ENCODE measurements at regions of chr15 and their contacts with region 1.

Region 1: DNA sequence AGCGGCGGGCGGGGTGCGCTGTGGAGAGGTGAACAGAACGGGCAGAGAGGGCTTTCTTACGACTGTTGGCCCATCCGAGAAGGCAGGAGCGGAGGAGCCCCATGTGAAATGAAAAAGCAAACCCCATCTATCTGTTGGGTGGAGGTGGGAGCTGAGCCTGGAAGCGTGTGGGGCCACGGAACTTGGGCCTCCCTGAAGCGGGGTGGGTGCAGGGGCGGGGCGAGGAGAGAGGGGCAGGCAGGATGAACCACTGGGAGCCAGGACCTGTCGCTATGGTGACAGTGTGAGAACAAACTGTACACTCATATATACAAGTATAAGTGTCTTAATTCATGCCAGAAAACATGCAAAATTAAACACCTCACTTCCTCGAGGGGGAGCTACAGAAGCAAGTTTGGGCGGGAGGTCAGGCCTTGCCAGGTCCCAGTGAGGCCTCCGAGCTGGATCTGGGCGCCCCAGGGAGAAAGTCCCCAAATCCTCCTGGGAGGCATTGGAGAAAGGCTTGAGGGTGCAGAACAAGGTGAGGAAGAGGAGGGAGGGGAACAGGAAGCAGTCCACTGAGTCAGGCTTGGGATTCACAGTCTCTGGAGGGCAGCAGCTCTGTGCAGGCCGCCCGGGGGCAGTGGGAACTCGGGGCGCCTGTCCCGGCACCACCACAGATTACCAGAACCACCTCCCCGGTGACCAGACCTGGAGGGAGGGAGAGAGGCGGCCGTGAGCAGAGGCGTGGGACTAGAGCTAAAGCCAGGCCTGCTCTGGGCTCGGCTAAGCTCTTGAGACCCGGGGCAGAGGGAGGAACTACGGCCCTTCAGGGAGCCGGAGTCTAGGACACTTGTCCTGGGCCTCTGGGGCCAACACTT is 34.8 kb downstream of the RBPMS2 start:
- DNase-seq: peak; percentile 80
- H3K4me3 ChIP-seq: no peak overlapping the region
- H3K27ac ChIP-seq: peak overlapping the region; percentile 65 to 69
- H3K4me1 ChIP-seq: peaks cover 15% of the 10 kb centered on the region
- H3K27me3 ChIP-seq: no peaks in the 10 kb centered on the region
- CTCF ChIP-seq: peak in 1 of 3 experiments; percentile 12
- POLR2A ChIP-seq: no peak

Region 2: DNA sequence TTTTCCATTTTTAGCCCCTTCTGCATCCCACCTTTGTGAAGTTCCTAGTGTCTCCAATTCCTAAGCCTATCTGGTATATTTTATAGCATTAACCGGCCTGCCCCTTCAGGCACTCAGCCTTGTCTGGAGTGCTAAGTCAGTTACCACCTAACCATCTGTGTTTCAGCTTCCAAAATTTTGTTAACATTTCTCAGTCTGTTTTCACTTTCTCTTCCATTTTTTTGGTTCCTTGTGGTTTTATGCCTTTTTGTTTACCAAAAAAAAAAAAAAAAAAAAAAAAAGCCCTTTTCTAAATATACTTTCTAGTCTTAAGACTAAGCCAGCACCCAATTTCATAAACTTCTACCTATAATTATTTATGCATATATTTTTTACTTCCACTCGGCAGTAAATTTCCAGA is 477.0 kb before region 1 on chr15:
- intact Hi-C with region 1: no loop called
- DNase-seq: no peak
- H3K4me3 ChIP-seq: no peak overlapping the region
- H3K27ac ChIP-seq: no peak overlapping the region
- H3K4me1 ChIP-seq: no peaks in the 10 kb centered on the region
- H3K27me3 ChIP-seq: no peaks in the 10 kb centered on the region
- CTCF ChIP-seq: no peak
- POLR2A ChIP-seq: no peak

Region 3: DNA sequence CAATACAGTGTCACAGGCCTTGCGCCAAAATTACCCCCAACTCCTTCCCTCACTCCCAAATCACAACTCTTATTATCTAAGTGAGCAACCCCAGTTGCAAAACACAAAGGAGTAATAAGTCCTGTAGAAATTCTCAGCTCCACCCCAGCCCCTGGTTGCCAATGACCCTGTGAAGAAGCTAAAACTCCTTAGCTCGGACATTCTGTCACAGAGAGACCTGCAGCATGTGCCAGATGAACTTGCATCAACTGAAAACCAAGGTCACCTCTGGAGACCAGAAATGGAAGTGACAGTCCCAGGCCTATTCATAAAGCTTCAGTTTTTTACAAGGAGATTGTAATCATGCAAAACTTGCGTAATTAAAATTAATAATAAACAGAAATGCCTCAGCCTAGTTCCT is 20.4 kb before region 1 on chr15:
- intact Hi-C with region 1: no loop called
- DNase-seq: peak; percentile 78
- H3K4me3 ChIP-seq: no peak overlapping the region
- H3K27ac ChIP-seq: no peak overlapping the region
- H3K4me1 ChIP-seq: peaks cover 13% of the 10 kb centered on the region
- H3K27me3 ChIP-seq: no peaks in the 10 kb centered on the region
- CTCF ChIP-seq: no peak
- POLR2A ChIP-seq: no peak

Region 4: DNA sequence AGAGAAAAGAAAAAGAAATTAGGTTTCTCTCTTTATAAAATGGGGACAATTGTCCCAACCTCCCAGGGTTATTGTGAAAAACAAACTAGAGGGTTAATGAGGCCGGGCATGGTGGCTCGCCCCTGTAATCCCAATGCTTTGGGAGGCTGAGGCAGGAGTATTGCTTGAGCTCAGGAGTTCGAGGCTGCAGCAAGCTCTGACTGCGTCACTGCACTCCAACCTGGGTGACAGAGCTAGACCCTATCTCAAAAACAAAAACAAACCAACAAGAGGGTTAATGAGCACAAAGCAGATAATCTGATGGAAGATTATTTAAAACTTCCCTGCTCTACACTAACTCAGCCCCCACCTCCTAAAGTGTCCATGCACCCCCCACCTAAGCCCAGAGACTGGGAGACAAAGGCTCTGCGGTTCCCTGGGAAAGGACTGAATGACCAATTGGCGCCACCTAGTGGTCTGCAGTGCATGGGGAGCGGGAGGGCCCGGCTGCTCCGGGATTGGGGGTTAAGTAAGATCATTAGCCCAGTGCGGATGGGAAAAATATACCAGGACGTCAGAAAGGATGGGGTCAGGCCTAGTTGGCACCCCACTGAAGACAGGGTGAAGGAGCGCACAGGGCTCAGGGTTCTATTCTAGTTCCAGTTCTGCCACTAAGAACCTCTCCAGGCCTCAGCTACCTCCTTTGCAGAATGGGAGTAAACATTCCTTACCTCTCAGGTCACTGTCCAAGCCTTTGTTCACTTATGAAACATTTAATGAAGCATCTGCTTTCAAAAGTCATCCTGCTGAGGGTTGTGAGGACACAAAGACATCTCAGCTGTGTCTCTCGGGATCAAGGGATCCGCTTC is 69.3 kb after region 1 on chr15:
- intact Hi-C with region 1: loop called (anchors 10 kb)
- DNase-seq: peak; percentile 90
- H3K4me3 ChIP-seq: no peak overlapping the region
- H3K27ac ChIP-seq: no peak overlapping the region
- H3K4me1 ChIP-seq: peaks cover 4% of the 10 kb centered on the region
- H3K27me3 ChIP-seq: no peaks in the 10 kb centered on the region
- CTCF ChIP-seq: peak; percentile 81 to 87 (median 83)
- POLR2A ChIP-seq: no peak

Region 5: DNA sequence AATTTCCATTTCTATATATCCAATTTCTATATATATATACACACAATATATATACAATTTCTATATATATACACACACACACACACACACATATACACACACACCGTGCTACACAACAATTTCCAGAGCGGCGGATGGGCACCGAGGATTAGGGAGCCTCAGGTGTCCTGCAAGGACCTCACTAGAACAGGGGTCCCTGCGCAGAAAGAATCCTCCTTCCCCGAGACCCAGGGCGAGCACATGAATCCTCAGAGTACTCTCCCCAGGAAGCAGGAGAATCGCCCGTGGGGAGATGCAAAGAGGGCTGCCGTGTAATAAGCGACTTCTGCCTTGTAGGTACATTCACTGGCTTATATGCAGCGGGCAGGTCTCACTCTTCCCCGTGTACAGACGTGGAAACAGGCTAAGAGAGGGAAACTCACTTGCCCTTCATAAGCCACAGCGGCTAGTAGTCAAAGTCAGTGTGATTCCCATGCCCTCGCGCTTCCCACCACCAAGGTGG is 84.4 kb after region 1 on chr15:
- intact Hi-C with region 1: loop called (anchors 5 kb)
- DNase-seq: no peak
- H3K4me3 ChIP-seq: peak overlapping the region; percentile 43 to 57
- H3K27ac ChIP-seq: no peak overlapping the region
- H3K4me1 ChIP-seq: peaks cover 16% of the 10 kb centered on the region
- H3K27me3 ChIP-seq: no peaks in the 10 kb centered on the region
- CTCF ChIP-seq: no peak
- POLR2A ChIP-seq: no peak

Region 6: DNA sequence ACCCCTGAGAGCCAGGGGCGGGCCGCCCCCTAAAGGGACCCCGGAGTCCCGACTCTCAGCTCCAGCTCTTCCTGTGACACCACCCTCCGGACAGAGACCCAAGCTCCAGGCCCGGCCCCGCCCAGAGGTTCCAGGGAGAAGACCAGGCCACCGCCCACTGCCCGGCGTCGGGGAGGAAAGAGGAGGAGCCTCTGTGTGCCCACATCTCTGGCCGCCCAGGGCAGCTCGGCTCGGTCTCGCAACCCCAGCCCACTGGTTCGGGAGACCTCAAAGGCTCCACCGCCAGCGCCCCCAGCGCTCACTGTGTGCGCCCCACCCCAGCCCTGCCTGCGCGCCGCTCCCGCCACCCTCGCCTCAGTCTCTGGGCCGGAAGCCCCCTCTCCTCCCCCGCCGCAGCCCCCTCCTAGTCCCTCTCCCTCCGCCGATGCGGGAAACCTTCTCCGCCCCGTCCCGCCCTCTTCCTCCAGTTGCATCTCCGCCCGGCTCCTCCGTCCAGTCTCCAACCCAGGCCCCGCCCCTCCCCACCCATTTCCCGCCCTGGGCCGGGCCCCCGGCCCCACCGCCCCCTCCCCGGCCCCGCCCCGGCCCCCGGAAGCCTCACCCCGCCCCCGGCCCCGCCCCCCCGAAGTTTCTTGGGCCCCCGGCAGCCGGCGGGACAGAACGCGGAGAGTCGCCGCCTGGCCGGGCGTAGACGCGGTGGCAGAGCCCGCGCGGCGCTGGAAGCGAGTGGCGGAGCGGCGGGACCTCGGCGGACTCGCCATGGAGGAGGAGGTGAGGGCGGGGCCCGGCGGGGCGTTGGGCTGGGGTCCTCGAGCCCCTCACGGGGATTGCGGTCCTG is 100.9 kb after region 1 on chr15 and contains the start of gene PLEKHO2:
- intact Hi-C with region 1: no loop called
- DNase-seq: peak; percentile 96
- H3K4me3 ChIP-seq: peak within 1 kb of the TSS; percentile 84 to 98
- H3K27ac ChIP-seq: peak within 1 kb of the TSS; percentile 90 to 95
- H3K4me1 ChIP-seq: peaks cover 25% of the 10 kb centered on the region
- H3K27me3 ChIP-seq: no peaks in the 10 kb centered on the region
- CTCF ChIP-seq: no peak
- POLR2A ChIP-seq: peak; percentile 49
- total RNA-seq, gene PLEKHO2: 17.2 to 28.9 TPM